Transverse colon (tissue), 4 donors: ENCODE measurements at regions of chr1 and their contacts with region 1.

Region 1: GRCh38 chr1:43067977-43068751 is 103.9 kb downstream of the EBNA1BP2 start:
- DNase-seq: peak; percentile 23
- H3K4me3 ChIP-seq: peak overlapping the region; percentile 24 to 45 (median 36)
- H3K27ac ChIP-seq: no peak overlapping the region
- H3K4me1 ChIP-seq: peaks cover 3 to 11% (median 8%) of the 10 kb centered on the region in 4 donors
- H3K27me3 ChIP-seq: peaks cover 13% of the 10 kb centered on the region
- CTCF ChIP-seq: no peak
- EP300 ChIP-seq: no peak
- POLR2A ChIP-seq: no peak

Region 2: DNA sequence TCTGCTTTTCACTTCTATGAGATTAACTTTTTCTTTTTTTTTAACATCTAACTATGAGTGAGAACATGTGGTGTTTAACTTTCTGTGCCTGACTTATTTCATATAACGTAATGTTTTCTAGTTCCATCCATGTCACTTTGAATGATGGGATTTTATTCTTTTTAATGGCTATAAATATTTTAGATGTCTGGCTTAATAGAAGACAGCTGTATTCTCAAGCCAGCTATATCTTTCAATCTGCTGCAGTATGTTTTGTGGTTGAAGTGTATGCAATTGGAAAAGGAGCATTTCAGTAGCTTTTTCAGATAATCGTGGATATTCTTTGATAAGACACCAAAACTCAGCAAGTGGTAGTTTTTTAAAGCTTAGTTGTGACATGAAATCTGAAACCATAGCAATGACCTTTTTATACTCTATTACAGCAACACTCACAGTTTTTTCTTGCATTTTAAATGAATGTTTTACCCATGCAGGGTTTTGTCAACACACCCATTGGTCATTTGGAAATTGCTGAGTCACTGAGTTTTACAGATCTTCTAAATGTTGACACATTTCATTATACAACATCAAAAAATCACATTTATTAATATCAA is 245.3 kb before region 1 on chr1:
- in situ Hi-C with region 1: no loop called
- intact Hi-C with region 1: no loop called
- DNase-seq: no peak
- H3K4me3 ChIP-seq: no peak overlapping the region
- H3K27ac ChIP-seq: no peak overlapping the region
- H3K4me1 ChIP-seq: peaks cover 0 to 15% (median under 1%) of the 10 kb centered on the region in 4 donors
- H3K27me3 ChIP-seq: no peaks in the 10 kb centered on the region
- CTCF ChIP-seq: no peak
- EP300 ChIP-seq: no peak
- POLR2A ChIP-seq: no peak

Region 3: GRCh38 chr1:42913426-42914091 is 154.6 kb before region 1 on chr1:
- in situ Hi-C with region 1: loop called in 3 of 4 experiments (anchors 5 kb)
- intact Hi-C with region 1: loop called (anchors 5 kb)
- DNase-seq: peak; percentile 64
- H3K4me3 ChIP-seq: no peak overlapping the region
- H3K27ac ChIP-seq: no peak overlapping the region
- H3K4me1 ChIP-seq: peaks cover 0 to 2% (median under 1%) of the 10 kb centered on the region in 4 donors
- H3K27me3 ChIP-seq: no peaks in the 10 kb centered on the region
- CTCF ChIP-seq: peak; percentile 74 to 94 (median 83)
- EP300 ChIP-seq: no peak
- POLR2A ChIP-seq: no peak